OCI-LY7 (cell line): ENCODE measurements at regions of chr22 and their contacts with region 1.

Region 1: GRCh38 chr22:30005213-30005857 is 74.9 kb upstream of the HORMAD2 start:
- DNase-seq: peak; percentile 57
- H3K4me3 ChIP-seq: no peak overlapping the region
- H3K27ac ChIP-seq: no peak overlapping the region
- H3K4me1 ChIP-seq: no peaks in the 10 kb centered on the region
- CTCF ChIP-seq: peak; percentile 100

Region 2: DNA sequence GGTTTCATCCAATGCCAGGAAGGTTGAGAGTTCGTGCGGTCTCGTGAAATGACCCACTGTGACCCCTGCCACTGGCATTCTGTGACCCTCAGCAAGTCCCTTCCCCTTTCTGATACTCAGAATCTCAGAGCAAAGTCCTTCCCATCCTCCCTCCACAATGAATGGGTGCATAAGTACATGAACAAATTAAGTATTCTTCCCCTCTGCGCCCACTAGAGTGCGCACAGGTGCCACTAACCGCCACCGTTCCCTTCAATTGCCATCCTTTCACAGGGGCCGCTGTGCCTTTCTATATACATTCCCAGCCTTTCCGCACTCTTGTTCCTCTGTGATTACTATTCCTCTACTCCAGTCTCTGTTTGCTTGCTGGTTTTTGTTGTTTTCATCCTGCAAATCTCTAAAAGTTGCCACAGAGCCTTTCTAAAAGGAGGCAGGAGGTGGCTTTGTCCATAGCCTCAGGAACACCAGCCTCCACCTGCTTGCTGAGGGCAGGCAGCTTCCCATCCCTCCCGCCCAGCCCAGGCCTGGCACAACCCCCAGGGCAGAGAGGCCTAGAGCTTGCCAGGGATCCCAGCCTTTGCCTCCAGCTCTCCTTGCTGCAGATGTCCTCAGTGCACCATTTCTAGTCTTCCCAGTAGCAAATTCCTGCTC is 610.3 kb before region 1 on chr22:
- CTCF ChIA-PET with region 1: no interaction called
- POLR2A ChIA-PET with region 1: no interaction called
- intact Hi-C with region 1: loop called (anchors 5 kb)
- DNase-seq: peak; percentile 82
- H3K4me3 ChIP-seq: no peak overlapping the region
- H3K27ac ChIP-seq: no peak overlapping the region
- H3K4me1 ChIP-seq: peaks cover 36% of the 10 kb centered on the region
- CTCF ChIP-seq: peak; percentile 95

Region 3: GRCh38 chr22:29635734-29636357 is 369.5 kb before region 1 on chr22:
- CTCF ChIA-PET with region 1: no interaction called
- POLR2A ChIA-PET with region 1: interaction called, 3 read pairs
- intact Hi-C with region 1: loop called (anchors 5 kb)
- DNase-seq: peak; percentile 58
- H3K4me3 ChIP-seq: no peak overlapping the region
- H3K27ac ChIP-seq: no peak overlapping the region
- H3K4me1 ChIP-seq: no peaks in the 10 kb centered on the region
- CTCF ChIP-seq: peak; percentile 92

Region 4: DNA sequence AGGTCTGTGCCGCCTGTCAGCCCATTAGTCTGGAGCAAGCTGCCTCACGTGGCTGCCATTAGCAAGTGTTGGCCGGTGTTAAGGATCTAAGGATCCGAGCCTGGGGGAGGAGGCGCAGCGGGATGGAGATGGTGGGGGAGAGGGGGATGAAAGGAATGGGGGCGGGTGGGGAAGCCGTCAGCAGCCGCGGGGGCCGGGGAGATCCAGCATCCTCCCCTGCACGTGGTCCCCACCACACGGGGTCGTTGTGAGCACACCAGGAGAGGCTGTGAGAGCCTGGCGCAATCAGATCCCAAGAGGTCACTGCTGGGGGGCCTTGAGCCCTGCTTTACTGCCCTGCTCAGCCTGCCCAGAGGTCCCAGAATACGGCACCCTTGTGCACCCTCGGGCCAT is 278.2 kb before region 1 on chr22:
- CTCF ChIA-PET with region 1: no interaction called
- POLR2A ChIA-PET with region 1: no interaction called
- intact Hi-C with region 1: loop called (anchors 1 kb)
- DNase-seq: peak; percentile 30
- H3K4me3 ChIP-seq: no peak overlapping the region
- H3K27ac ChIP-seq: no peak overlapping the region
- H3K4me1 ChIP-seq: no peaks in the 10 kb centered on the region
- CTCF ChIP-seq: peak; percentile 58

Region 5: DNA sequence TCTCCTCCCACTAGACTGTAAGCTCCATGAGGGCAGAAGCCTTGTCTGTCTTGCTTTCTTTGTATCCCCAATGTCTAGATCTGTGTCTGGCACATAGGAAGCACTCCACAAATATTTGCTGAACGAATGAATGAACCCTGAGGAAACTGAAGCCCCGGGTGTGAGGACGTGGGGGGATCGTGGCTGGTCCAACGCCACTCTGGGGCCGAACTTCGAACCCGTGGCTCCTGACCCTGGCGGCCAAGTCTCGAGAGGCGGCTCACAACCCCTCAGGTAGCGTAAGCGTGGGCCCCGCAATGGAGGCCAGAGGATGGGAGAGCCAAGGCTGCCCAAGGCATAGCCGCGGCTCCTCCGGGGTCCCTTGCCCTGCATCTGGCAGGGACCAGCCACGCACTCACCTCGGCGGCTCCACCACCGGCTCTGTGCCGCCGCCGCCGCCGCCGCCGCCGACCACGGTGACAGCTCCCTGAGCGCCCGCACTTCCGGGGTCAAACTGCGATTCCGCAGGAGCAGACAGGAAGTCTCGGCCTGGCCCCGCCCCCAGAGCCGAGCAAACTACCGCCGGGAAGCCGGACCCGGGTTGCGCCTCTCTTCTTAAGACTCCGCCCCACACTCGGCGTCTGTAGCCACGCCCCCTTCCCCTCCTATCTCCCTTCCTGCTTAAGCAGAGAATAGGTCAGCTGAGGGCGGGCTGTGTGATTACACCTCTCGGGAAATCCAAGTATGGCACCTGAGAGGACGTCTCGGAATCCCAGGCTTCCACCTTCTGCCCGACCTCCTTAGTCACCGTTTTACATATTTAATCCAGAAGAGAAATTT is 167.3 kb before region 1 on chr22 and contains the start of gene ASCC2:
- CTCF ChIA-PET with region 1: no interaction called
- POLR2A ChIA-PET with region 1: no interaction called
- intact Hi-C with region 1: loop called (anchors 10 kb)
- DNase-seq: peak; percentile 98
- H3K4me3 ChIP-seq: peak within 1 kb of the TSS; percentile 99
- H3K27ac ChIP-seq: peak within 1 kb of the TSS; percentile 14
- H3K4me1 ChIP-seq: peaks cover 19% of the 10 kb centered on the region
- CTCF ChIP-seq: no peak
- total RNA-seq, gene ASCC2: 40.2 and 44.1 TPM in 2 replicates